Esophagus squamous epithelium (tissue), 5 donors: ENCODE measurements at regions of chr11 and their contacts with region 1.

Region 1: DNA sequence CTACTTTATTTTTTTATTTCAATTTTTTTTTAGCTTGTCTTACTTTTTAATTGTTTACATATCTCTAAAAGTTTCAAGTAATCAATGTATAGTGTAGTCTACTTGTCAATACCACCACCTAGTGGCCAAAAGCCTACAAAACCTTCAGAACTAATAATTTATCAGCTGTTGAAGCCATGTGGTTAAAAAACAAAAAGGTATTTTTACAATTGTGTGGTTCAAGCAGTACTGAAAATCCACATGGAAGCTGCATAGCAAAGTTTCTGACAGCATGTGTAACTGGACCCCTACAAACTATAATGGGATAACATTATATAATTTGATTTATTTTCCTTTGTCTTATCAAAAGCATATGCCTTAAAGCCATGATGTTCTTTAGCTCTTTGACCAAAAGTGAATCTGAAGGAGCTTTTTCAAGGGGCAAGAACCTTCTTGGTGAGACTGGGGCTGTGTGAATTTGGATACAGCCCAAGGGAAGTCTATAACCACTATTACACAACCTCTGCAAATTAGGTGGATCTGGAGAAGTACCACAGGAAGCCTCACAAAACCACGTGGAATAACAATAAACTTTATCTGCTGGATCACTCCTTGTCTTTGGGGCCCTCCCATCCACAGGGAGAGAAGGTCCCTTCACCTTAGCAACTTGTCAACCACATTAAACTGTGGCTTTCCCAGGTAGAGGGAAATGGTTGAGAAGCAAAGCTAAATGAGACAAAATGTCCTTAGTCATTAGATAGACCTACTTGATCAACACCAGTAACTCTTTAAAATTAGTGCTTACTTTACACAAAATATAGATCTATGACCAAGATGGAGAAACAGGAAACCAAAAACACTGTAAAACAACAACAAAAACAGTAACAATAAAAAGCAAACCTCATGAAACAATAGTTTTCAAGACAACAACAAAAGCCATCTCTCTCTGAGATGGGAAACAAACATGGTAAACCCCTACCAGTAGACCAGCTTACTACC is 9.9 kb downstream of the NARS2 start:
- DNase-seq: no peak
- H3K4me3 ChIP-seq: no peak overlapping the region
- H3K27ac ChIP-seq: no peak overlapping the region
- H3K4me1 ChIP-seq: peaks cover 3 to 24% (median 7%) of the 10 kb centered on the region in 3 donors
- H3K27me3 ChIP-seq: no peaks in the 10 kb centered on the region
- CTCF ChIP-seq: peak; percentile 21 to 83 (median 72)
- POLR2A ChIP-seq: no peak

Region 2: DNA sequence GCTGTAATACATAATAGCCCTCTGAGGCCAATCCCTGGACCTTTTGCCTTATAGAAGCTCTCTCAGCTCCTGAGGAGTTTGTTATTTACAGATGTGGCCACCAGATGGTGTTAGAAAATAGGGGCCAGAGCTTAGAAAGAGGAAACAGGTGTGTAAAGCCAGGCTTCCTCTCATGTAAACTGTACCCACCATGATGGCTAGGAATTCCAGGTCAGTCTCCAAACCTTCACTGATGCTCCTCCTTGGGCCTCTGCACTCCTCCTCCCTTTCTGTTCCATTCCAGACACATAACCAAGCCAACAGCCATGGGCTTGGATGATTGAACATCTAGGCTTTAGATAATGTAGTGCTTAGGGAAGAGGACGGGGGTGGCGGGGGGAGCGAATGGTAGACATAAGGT is 336.3 kb before region 1 on chr11:
- intact Hi-C with region 1: loop called (anchors 10 kb)
- DNase-seq: no peak
- H3K4me3 ChIP-seq: no peak overlapping the region
- H3K27ac ChIP-seq: no peak overlapping the region
- H3K4me1 ChIP-seq: peaks cover 0 to 33% (median 4%) of the 10 kb centered on the region in 3 donors
- H3K27me3 ChIP-seq: no peaks in the 10 kb centered on the region
- CTCF ChIP-seq: peak; percentile 17 to 62 (median 52)
- POLR2A ChIP-seq: no peak

Region 3: DNA sequence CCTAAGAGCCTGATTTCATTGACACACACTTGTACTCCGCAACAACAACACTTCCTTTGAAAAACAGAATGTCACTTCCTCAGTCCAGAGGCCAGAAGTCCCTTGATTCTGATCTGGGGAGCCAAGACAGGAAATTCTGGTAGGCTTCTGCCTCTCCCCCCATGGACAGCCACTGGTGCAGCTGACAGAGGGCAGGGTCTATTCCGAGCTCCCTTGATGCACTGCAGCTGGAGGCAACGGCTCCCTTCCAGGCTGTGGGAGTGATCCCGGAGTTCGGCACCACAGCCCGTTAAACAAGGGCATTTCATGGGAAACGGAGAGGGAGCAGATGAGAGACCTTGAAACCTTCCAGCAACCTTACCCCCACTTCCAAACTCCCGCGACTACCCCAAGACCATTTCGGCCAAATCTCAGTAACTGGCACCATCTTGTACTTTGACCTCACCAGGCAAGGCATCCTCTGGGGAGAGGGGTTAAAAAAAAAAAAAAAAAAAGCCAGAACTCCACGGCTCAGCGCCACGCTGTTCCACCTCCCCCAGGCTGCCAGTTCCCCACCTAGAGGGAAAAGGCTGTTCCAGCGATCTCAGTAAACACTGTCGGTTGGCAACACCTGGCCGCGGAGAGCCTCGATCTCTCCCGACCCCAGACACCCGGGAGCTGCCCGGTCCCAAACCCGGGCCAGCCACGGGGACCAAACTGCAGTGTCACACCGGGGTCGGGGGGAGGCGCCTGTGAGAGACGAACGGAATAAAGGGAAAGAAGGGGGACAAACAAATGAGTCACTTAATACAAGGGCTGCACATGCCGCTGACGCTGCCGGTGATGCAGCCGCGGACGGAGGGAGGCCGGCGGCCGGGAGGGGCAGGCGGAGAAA is 148.2 kb before region 1 on chr11:
- intact Hi-C with region 1: loop called (anchors 5 kb)
- DNase-seq: peak; percentile 23
- H3K4me3 ChIP-seq: peak overlapping the region; percentile 53 to 95 (median 84)
- H3K27ac ChIP-seq: peak overlapping the region; percentile 86 to 99 (median 96)
- H3K4me1 ChIP-seq: peaks cover 11 to 58% (median 17%) of the 10 kb centered on the region in 3 donors
- H3K27me3 ChIP-seq: no peaks in the 10 kb centered on the region
- CTCF ChIP-seq: peak in 5 of 6 experiments; percentile 24 to 65 (median 27)
- POLR2A ChIP-seq: peak in 2 of 4 donors; percentile 79 to 87